ENCODE measurements at regions of chr2 and their contacts with region 1.

Region 1: DNA sequence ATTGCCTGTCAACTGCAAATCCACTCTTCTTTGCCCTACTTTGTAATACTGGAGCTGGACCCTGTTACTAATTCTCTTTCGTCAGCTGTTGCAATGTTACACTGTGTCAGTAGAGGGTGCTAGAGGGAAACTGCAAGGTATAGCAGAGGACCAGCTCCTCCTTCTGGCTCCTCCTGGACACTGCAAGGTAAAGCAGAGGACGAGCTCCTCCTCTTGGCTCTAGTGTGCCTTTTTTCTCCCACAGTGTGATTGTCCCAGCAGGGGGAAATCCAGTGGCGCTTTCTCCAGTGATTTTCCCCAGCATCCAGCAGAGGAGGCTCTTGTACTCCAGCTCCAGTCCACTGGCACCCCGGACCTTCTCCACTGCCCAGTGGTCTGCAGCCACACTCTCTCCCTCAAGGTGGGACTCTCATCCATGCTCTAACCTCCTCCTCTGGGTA is 95.6 kb downstream of the CAPN13 start:
- DNase-seq: peak; percentile 89
- H3K4me3 Mint-ChIP-seq: no peak overlapping the region
- H3K27ac Mint-ChIP-seq: no peak overlapping the region
- H3K4me1 Mint-ChIP-seq: peaks cover 10% of the 10 kb centered on the region
- H3K27me3 Mint-ChIP-seq: peaks cover 3% of the 10 kb centered on the region

Region 2: GRCh38 chr2:30098266-30099005 is 613.2 kb before region 1 on chr2:
- CTCF ChIA-PET with region 1: interaction called, 3 read pairs
- POLR2A ChIA-PET with region 1: no interaction called
- intact Hi-C with region 1: loop called (anchors 1 kb)
- DNase-seq: no peak
- H3K4me3 Mint-ChIP-seq: no peak overlapping the region
- H3K27ac Mint-ChIP-seq: no peak overlapping the region
- H3K4me1 Mint-ChIP-seq: no peaks in the 10 kb centered on the region
- H3K27me3 Mint-ChIP-seq: peaks cover 16% of the 10 kb centered on the region

Region 3: GRCh38 chr2:30155889-30156658 is 555.6 kb before region 1 on chr2:
- CTCF ChIA-PET with region 1: interaction called, 47 read pairs
- POLR2A ChIA-PET with region 1: no interaction called
- intact Hi-C with region 1: no loop called
- DNase-seq: no peak
- H3K4me3 Mint-ChIP-seq: no peak overlapping the region
- H3K27ac Mint-ChIP-seq: peak overlapping the region; percentile 59
- H3K4me1 Mint-ChIP-seq: peaks cover 51% of the 10 kb centered on the region
- H3K27me3 Mint-ChIP-seq: no peaks in the 10 kb centered on the region

Region 4: GRCh38 chr2:30208452-30208851 is 503.2 kb before region 1 on chr2:
- CTCF ChIA-PET with region 1: interaction called, 252 read pairs
- POLR2A ChIA-PET with region 1: no interaction called
- intact Hi-C with region 1: loop called (anchors 1 kb)
- DNase-seq: peak; percentile 56
- H3K4me3 Mint-ChIP-seq: no peak overlapping the region
- H3K27ac Mint-ChIP-seq: no peak overlapping the region
- H3K4me1 Mint-ChIP-seq: peaks cover 13% of the 10 kb centered on the region
- H3K27me3 Mint-ChIP-seq: no peaks in the 10 kb centered on the region

Region 5: DNA sequence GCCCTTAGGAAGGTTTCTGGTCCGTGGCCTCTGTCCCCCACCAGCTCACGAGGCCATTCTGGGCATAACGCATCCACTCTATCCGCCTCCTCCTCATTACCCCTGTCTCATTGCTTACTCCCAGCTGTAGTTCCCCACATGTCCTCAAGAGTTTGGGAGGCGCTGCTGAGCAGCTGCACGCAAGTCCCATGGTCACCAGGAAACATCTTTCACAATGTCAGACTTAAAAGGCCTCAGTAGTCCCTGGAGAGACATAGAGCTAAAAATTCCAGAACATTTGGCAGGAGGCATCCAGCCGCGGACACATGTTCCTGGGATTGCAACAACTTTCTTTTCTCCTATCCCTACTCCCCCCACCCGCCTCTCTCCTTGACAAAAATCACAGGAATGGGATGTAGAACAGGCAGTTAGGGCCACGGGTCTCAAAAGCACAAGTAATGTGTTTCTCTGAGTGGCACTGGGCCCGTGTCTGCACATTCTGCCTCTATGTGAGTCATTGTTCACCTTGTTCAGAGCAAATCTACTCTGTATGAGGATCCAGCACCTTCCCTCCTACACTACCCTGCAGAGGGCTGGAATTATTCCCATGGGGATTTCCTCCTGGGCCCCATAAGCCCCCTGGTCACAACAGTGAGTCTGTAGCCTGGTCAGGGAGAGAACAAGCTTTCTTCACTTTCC is 472.2 kb before region 1 on chr2:
- CTCF ChIA-PET with region 1: interaction called, 15 read pairs
- POLR2A ChIA-PET with region 1: no interaction called
- intact Hi-C with region 1: no loop called
- DNase-seq: peak; percentile 87
- H3K4me3 Mint-ChIP-seq: peak overlapping the region; percentile 54
- H3K27ac Mint-ChIP-seq: peak overlapping the region; percentile 86
- H3K4me1 Mint-ChIP-seq: peaks cover 93% of the 10 kb centered on the region
- H3K27me3 Mint-ChIP-seq: no peaks in the 10 kb centered on the region

Region 6: GRCh38 chr2:30691948-30692828 is 19.5 kb before region 1 on chr2:
- CTCF ChIA-PET with region 1: interaction called, 32 read pairs
- POLR2A ChIA-PET with region 1: no interaction called
- intact Hi-C with region 1: no loop called
- DNase-seq: no peak
- H3K4me3 Mint-ChIP-seq: no peak overlapping the region
- H3K27ac Mint-ChIP-seq: no peak overlapping the region
- H3K4me1 Mint-ChIP-seq: no peaks in the 10 kb centered on the region
- H3K27me3 Mint-ChIP-seq: no peaks in the 10 kb centered on the region

Region 7: DNA sequence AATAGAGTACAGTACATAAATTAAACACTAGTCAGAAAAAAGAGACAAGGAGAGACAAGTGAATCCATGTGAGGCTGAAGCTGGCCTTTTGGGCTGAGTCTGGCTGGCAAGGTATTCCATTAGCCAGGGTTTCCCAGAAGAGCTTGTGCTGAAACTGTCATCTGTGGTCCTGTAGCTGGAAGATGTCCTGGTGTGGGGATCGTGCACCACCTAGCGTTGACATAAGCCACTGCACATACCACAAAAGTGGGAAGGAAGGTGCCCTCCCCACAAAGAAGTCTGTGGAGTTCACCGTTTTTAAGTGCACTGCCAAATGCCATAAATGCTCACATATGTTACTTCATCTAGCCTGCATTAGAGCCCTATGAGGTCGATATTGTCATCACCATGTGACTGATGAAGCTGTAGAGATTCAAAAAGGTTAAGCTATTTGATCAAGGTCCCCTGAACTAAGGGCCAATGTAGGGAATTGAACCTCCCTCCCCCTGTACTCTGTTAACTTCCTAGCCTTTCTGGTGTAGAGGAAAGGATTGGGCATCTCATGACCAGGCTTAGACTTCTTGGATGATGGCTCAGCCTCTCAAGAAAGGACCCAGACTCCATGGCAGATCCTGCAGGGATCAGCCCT is 458.5 kb after region 1 on chr2:
- CTCF ChIA-PET with region 1: interaction called, 129 read pairs
- POLR2A ChIA-PET with region 1: no interaction called
- intact Hi-C with region 1: loop called (anchors 1 kb)
- DNase-seq: peak; percentile 67
- H3K4me3 Mint-ChIP-seq: no peak overlapping the region
- H3K27ac Mint-ChIP-seq: no peak overlapping the region
- H3K4me1 Mint-ChIP-seq: no peaks in the 10 kb centered on the region
- H3K27me3 Mint-ChIP-seq: no peaks in the 10 kb centered on the region